WTC11 (cell line): ENCODE measurements at regions of chr12 and their contacts with region 1.

Region 1: GRCh38 chr12:389139-390096 is at the start of gene KDM5A:
- DNase-seq: peak; percentile 83
- ATAC-seq: peak; percentile 96
- H3K4me3 Mint-ChIP-seq: peak within 1 kb of the TSS; percentile 99
- H3K27ac Mint-ChIP-seq: peak within 1 kb of the TSS; percentile 100
- H3K4me1 Mint-ChIP-seq: peaks cover 20% of the 10 kb centered on the region
- H3K27me3 Mint-ChIP-seq: no peaks in the 10 kb centered on the region; the same call in 1 of the 2 replicates
- CTCF ChIP-seq: no peak
- total RNA-seq, gene KDM5A: 49.2 to 57.6 TPM (median 52.0 TPM) in 3 replicates

Region 2: DNA sequence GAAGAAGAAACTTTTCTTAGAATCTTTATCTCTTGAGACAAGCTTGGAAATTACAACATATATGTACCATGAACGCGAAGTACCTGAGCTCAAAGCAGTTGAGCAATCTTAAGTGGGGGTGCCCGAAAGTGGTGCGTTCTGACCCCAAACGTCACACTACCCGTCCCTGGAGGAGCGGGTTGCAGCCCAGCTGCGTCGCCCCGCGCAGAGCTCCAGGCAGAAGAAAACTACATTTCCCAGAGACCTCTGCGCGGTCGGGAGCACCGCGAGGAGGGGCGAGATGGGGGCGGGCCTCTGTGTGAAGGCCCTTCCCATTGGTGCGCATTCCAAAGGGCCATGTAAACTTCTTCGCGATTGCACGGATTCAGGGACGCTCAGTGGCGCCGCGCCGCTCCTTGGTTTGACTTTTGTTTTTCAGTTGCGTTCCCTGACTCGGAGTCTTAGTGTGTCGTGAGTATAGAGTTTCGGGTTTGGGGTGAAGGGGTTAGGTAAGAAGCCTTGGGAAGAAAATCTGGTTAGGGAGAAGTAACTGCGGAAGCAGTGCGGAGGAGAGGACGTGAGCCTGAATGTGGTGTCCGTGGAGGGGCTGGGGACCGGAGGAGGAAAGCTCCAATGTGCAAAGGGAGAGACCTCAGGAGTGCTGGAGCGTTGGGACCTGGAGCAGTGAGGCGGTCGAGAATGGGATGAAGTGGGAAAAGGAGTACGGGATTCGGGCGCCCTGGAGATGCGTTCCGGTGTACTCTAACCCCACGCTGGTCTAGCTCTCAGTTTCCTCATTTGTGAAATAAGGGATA is 12.0 kb after region 1 on chr12 and contains the start of gene CCDC77:
- CTCF ChIA-PET with region 1: interaction called, 4 read pairs
- POLR2A ChIA-PET with region 1: interaction called, 12 read pairs
- DNase-seq: peak; percentile 93
- ATAC-seq: peak; percentile 99
- H3K4me3 Mint-ChIP-seq: no peak within 1 kb of the TSS
- H3K27ac Mint-ChIP-seq: no peak within 1 kb of the TSS
- H3K4me1 Mint-ChIP-seq: no peaks in the 10 kb centered on the region
- H3K27me3 Mint-ChIP-seq: no peaks in the 10 kb centered on the region
- CTCF ChIP-seq: no peak
- total RNA-seq, gene CCDC77: 24.2 to 29.7 TPM (median 28.9 TPM) in 3 replicates